AG04450 (cell line): ENCODE measurements at regions of chr1 and their contacts with region 1.

Region 1: GRCh38 chr1:93629099-93630059 is 52.3 kb downstream of the BCAR3 start:
- DNase-seq: peak; percentile 67
- H3K4me3 ChIP-seq: no peak overlapping the region
- H3K27ac ChIP-seq: no peak overlapping the region
- H3K27me3 ChIP-seq: no peaks in the 10 kb centered on the region
- CTCF ChIP-seq: peak; percentile 77

Region 2: GRCh38 chr1:93471911-93472310 is 157.5 kb before region 1 on chr1:
- CTCF ChIA-PET with region 1: no interaction called
- POLR2A ChIA-PET with region 1: no interaction called
- DNase-seq: peak; percentile 15
- H3K4me3 ChIP-seq: no peak overlapping the region
- H3K27ac ChIP-seq: no peak overlapping the region
- H3K27me3 ChIP-seq: no peaks in the 10 kb centered on the region
- CTCF ChIP-seq: no peak

Region 3: GRCh38 chr1:93565496-93566206 is 63.7 kb before region 1 on chr1:
- CTCF ChIA-PET with region 1: no interaction called
- POLR2A ChIA-PET with region 1: no interaction called
- DNase-seq: peak; percentile 18
- H3K4me3 ChIP-seq: no peak overlapping the region
- H3K27ac ChIP-seq: no peak overlapping the region
- H3K27me3 ChIP-seq: no peaks in the 10 kb centered on the region
- CTCF ChIP-seq: no peak

Region 4: GRCh38 chr1:93672069-93672468 is 42.7 kb after region 1 on chr1:
- CTCF ChIA-PET with region 1: interaction called, 31 read pairs
- POLR2A ChIA-PET with region 1: interaction called, 4 read pairs
- DNase-seq: no peak
- H3K4me3 ChIP-seq: no peak overlapping the region
- H3K27ac ChIP-seq: peak overlapping the region; percentile 42
- H3K27me3 ChIP-seq: no peaks in the 10 kb centered on the region
- CTCF ChIP-seq: no peak

Region 5: DNA sequence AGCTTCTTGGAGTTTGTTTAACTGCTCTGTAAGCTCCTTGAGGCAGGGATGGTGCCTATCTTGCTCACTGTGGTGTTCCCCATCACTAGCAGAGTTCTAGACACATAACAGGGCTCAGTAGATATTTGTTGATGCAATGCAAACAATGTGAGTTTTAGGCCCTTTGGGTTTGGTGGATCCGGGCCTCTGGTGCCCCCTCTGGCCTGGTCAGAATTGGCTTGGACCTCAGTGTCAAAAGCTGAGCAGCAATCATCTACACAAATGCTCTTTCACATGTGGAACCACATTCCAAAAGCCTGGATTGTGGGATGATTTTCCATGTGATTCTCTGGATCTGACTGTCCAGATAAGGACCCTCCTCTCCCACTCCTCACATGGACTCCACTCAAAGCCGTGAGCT is 105.6 kb after region 1 on chr1:
- CTCF ChIA-PET with region 1: interaction called, 26 read pairs
- POLR2A ChIA-PET with region 1: no interaction called
- DNase-seq: no peak
- H3K4me3 ChIP-seq: no peak overlapping the region
- H3K27ac ChIP-seq: no peak overlapping the region
- H3K27me3 ChIP-seq: no peaks in the 10 kb centered on the region
- CTCF ChIP-seq: peak; percentile 44

Region 6: DNA sequence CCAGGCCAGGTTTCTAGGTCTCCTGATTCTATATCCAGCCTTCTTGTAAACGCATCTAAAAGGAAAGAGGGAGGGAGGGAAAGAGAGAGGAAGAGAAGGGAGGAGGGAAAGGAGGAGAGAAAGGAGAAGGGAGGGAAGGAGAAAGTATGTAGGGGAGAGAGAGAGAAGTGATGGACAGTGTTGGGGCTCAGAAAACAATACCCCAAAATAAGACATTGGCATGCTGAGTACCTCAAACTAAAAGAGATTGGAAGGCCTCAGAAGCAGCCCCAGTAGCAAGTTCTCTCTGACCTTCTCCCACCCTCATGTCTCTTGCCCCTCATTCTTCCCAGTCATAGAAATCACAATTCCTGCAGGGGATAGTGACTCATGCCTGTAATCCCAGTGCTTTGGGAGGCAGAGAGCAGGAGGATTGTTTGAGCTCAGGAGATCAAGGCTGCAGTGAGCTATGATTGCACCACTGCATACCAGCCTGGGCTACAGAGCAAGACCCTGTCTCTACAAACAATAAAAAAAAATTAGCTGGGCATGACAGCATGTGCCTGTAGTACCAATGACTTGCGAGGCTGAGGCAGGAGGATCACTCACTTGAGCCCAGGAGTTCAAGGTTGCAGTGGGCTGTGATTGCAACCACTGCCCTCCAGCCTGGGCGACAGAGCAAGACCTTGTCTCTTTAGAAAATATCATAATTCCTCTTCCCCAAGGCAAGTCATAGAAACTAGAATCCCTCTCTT is 198.4 kb after region 1 on chr1:
- CTCF ChIA-PET with region 1: interaction called, 10 read pairs
- POLR2A ChIA-PET with region 1: no interaction called
- DNase-seq: no peak
- H3K4me3 ChIP-seq: no peak overlapping the region
- H3K27ac ChIP-seq: no peak overlapping the region
- H3K27me3 ChIP-seq: no peaks in the 10 kb centered on the region
- CTCF ChIP-seq: no peak

Region 7: DNA sequence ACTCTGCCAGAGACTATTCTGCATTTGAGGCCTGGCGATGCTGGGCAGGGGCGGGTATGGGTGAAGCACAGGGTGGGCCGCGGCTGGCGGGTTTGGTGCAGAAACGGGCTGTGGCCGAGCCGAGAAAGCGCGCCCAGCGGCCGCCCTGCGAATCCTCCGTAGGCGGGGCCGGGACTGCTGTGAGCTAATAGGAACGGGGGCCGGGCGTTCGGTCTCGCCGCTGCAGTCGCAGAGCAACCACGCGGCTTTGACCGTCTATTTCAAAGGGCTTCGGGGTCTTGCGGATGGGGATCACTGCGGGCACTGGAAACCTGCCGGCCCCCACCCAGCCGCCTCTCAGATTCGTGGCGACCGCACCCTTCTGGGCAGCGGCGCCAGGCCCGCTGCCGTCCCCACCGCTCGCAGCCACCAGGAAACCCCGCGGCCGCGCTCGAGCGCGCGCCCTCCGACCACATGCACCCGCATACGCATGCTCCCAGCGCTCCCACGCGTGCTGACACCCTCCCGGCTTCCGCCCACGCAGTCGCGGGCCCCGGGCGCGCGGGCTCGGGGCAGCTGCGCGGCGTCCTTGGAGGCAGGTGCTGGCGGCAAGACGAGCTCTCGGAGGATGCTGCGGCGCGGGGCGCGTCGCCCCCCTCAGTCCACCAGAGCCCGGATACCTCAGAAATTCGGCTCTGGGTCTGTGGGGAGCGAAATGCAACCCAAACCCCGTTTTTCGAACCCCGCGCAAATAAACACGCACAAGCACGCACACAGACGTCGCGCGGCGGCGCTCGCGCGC is 217.0 kb after region 1 on chr1:
- CTCF ChIA-PET with region 1: interaction called, 217 read pairs
- POLR2A ChIA-PET with region 1: interaction called, 5 read pairs
- DNase-seq: peak; percentile 49
- H3K4me3 ChIP-seq: peak overlapping the region; percentile 83
- H3K27ac ChIP-seq: peak overlapping the region; percentile 98
- H3K27me3 ChIP-seq: no peaks in the 10 kb centered on the region
- CTCF ChIP-seq: peak; percentile 45